ENCODE measurements at regions of chrX and their contacts with region 1.

Region 1: GRCh38 chrX:141396536-141396935 is 154.2 kb upstream of the SPANXC start:
- DNase-seq: no peak
- H3K4me3 ChIP-seq: no peak overlapping the region
- H3K27ac ChIP-seq: no peak overlapping the region
- H3K4me1 ChIP-seq: no peaks in the 10 kb centered on the region
- H3K27me3 ChIP-seq: no peaks in the 10 kb centered on the region
- CTCF ChIP-seq: no peak
- POLR2A ChIP-seq: no peak

Region 2: GRCh38 chrX:143336261-143336660 is 1939.7 kb after region 1 on chrX:
- intact Hi-C with region 1: loop called (anchors 5 kb)
- DNase-seq: no peak
- H3K4me3 ChIP-seq: no peak overlapping the region
- H3K27ac ChIP-seq: no peak overlapping the region
- H3K4me1 ChIP-seq: no peaks in the 10 kb centered on the region
- H3K27me3 ChIP-seq: no peaks in the 10 kb centered on the region
- CTCF ChIP-seq: no peak
- POLR2A ChIP-seq: no peak